ENCODE measurements at regions of chr11 and their contacts with region 1.

Region 1: DNA sequence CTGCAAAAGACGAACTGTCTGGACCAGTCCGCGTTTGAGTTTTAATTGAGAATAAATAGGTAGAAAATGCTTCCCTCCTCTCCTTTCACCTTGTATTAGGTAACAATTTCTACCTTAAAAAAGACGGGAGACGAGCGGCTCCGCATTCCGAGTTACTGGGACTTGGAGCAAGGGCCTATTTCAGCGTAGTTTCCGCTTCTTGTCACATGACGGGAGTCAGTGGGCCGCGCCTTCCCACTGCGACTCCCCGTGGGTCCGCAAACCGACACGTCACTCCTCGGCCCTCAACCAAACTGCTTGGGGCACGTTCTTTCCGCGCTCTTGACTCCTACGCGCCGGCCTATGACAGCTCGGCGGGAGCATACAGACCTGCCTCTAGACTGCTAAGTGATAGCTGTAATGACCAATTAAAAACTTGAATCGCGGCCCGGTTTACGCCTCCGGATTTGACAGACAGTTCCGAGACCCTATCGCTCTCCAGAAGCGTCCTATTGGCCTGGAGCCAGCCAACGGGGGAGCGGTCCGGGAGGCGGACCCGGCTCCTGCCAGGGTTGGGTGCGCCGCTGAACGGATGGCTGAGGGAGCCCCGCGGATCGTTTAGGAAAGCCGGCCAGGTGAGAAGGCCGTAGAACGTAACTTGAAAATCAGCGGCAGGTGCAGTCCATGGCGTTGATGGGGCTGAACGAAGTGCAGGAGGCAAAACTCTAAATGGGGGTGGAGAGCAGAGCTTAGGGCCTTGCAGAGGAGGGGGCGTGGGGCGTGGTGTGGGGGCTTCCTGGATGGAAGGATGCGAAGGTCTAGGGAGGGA is at the start of gene STT3A:
- DNase-seq: peak; percentile 100
- H3K4me3 ChIP-seq: peak within 1 kb of the TSS; percentile 85
- H3K4me3 Mint-ChIP-seq: peak within 1 kb of the TSS; percentile 98
- H3K27ac Mint-ChIP-seq: peak within 1 kb of the TSS; percentile 99
- H3K4me1 ChIP-seq: no peaks in the 10 kb centered on the region
- H3K4me1 Mint-ChIP-seq: peaks cover 22% of the 10 kb centered on the region
- H3K27me3 ChIP-seq: no peaks in the 10 kb centered on the region
- H3K27me3 Mint-ChIP-seq: no peaks in the 10 kb centered on the region
- CTCF ChIP-seq: no peak
- total RNA-seq, gene STT3A: 517 and 531 TPM in 2 replicates

Region 2: DNA sequence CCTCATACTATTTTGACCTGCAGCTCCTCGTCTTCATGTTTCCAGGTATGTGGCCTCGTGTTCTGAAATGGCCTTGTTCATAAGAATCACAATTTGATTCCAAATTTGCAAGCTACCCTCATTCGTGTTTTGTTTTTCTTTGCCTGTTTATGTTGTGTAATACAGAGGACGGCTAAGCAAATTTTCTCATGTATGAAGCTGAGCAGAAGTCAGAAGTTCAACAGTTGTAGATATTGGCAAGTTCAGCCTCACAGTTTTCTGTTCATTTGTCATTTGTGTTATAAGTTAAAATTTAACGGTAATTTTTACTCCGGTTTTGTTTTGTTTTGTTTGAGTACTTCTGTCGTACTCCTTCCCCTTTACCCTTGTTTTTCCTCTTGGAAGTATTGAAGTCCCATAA is 17.0 kb after region 1 on chr11:
- CTCF ChIA-PET with region 1: no interaction called
- POLR2A ChIA-PET with region 1: no interaction called
- intact Hi-C with region 1: no loop called
- DNase-seq: no peak
- H3K4me3 ChIP-seq: no peak overlapping the region
- H3K4me3 Mint-ChIP-seq: no peak overlapping the region
- H3K27ac Mint-ChIP-seq: no peak overlapping the region
- H3K4me1 ChIP-seq: no peaks in the 10 kb centered on the region
- H3K4me1 Mint-ChIP-seq: no peaks in the 10 kb centered on the region
- H3K27me3 ChIP-seq: no peaks in the 10 kb centered on the region
- H3K27me3 Mint-ChIP-seq: no peaks in the 10 kb centered on the region
- CTCF ChIP-seq: no peak

Region 3: GRCh38 chr11:125625630-125626287 is 33.2 kb after region 1 on chr11:
- CTCF ChIA-PET with region 1: no interaction called
- POLR2A ChIA-PET with region 1: interaction called, 18 read pairs
- intact Hi-C with region 1: loop called (anchors 1 kb)
- DNase-seq: peak; percentile 96 to 98
- H3K4me3 ChIP-seq: peak overlapping the region; percentile 68
- H3K4me3 Mint-ChIP-seq: peak overlapping the region; percentile 82
- H3K27ac Mint-ChIP-seq: peak overlapping the region; percentile 92
- H3K4me1 ChIP-seq: peaks cover 8% of the 10 kb centered on the region
- H3K4me1 Mint-ChIP-seq: peaks cover 17% of the 10 kb centered on the region
- H3K27me3 ChIP-seq: no peaks in the 10 kb centered on the region
- H3K27me3 Mint-ChIP-seq: no peaks in the 10 kb centered on the region
- CTCF ChIP-seq: no peak